WTC11 (cell line): ENCODE measurements at regions of chr12 and their contacts with region 1.

Region 1: GRCh38 chr12:25386831-25387731 is 136.4 kb upstream of the KRAS start:
- DNase-seq: peak; percentile 72
- ATAC-seq: peak; percentile 11
- H3K4me3 Mint-ChIP-seq: peak overlapping the region; percentile 89
- H3K27ac Mint-ChIP-seq: 0 out of 2 replicates have a peak overlapping the region, but pooled peaks have one; percentile 68
- H3K4me1 Mint-ChIP-seq: peaks cover 17% of the 10 kb centered on the region
- H3K27me3 Mint-ChIP-seq: peaks cover 24% of the 10 kb centered on the region
- CTCF ChIP-seq: peak; percentile 57; the same call in 1 of the 2 replicates

Region 2: GRCh38 chr12:25195056-25195971 is 191.8 kb before region 1 on chr12 and contains the starts of genes DNAI7 and ETFRF1:
- CTCF ChIA-PET with region 1: interaction called, 13 read pairs
- POLR2A ChIA-PET with region 1: interaction called, 8 read pairs
- DNase-seq: peak; percentile 100
- ATAC-seq: peak; percentile 98
- H3K4me3 Mint-ChIP-seq: peak within 1 kb of the TSS; percentile 93
- H3K27ac Mint-ChIP-seq: peak within 1 kb of the TSS; percentile 98
- H3K4me1 Mint-ChIP-seq: peaks cover 11% of the 10 kb centered on the region
- H3K27me3 Mint-ChIP-seq: no peaks in the 10 kb centered on the region
- CTCF ChIP-seq: no peak
- total RNA-seq, gene DNAI7: 0.25 TPM in 1 of 3 replicates, not detected in the others
- total RNA-seq, gene ETFRF1: 5.9 to 7.4 TPM (median 7.1 TPM) in 3 replicates

Region 3: DNA sequence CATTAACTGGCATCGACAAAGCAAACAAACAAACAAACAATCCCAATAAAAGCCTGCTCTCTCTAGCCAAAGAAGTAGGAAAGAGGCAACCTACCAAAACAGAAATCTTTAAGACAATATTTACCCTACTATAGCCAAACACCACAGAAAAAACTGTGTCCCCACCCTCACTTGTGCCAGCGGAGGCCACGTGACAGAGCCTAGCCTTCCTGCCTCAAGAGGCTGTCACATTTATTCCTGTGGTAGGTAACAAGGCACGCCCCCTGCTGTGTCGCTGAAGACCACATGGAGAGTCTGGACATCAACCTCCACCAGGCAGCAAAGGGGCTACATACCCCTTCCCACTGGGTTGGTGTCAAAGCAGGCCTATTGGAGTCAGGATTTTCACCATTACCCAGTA is 17.9 kb after region 1 on chr12:
- CTCF ChIA-PET with region 1: no interaction called
- POLR2A ChIA-PET with region 1: no interaction called
- DNase-seq: peak; percentile 25
- ATAC-seq: no peak
- H3K4me3 Mint-ChIP-seq: no peak overlapping the region
- H3K27ac Mint-ChIP-seq: no peak overlapping the region
- H3K4me1 Mint-ChIP-seq: 0 out of 2 replicates have a peak, but pooled peaks cover 4% of the 10 kb centered on the region
- H3K27me3 Mint-ChIP-seq: no peaks in the 10 kb centered on the region
- CTCF ChIP-seq: no peak

Region 4: GRCh38 chr12:25433581-25434325 is 46.7 kb after region 1 on chr12:
- CTCF ChIA-PET with region 1: interaction called, 10 read pairs
- POLR2A ChIA-PET with region 1: no interaction called
- DNase-seq: no peak
- ATAC-seq: no peak
- H3K4me3 Mint-ChIP-seq: no peak overlapping the region
- H3K27ac Mint-ChIP-seq: no peak overlapping the region
- H3K4me1 Mint-ChIP-seq: peaks cover 15% of the 10 kb centered on the region
- H3K27me3 Mint-ChIP-seq: no peaks in the 10 kb centered on the region
- CTCF ChIP-seq: no peak